ENCODE measurements at regions of chr2 and their contacts with region 1.

Region 1: GRCh38 chr2:11344342-11344955 is at the start of gene ROCK2:
- DNase-seq: peak; percentile 48 to 87
- H3K4me3 ChIP-seq: peak within 1 kb of the TSS; percentile 65
- H3K27ac ChIP-seq: peak within 1 kb of the TSS; percentile 98
- H3K4me1 ChIP-seq: peaks cover 50% of the 10 kb centered on the region
- H3K27me3 ChIP-seq: no peaks in the 10 kb centered on the region
- CTCF ChIP-seq: no peak
- total RNA-seq, gene ROCK2: 28.5 and 38.0 TPM in 2 replicates

Region 2: GRCh38 chr2:11154923-11155380 is 189.5 kb before region 1 on chr2:
- CTCF ChIA-PET with region 1: no interaction called
- POLR2A ChIA-PET with region 1: interaction called, 6 read pairs
- intact Hi-C with region 1: loop called (anchors 5 kb)
- DNase-seq: peak; percentile 84 to 97
- H3K4me3 ChIP-seq: peak overlapping the region; percentile 61
- H3K27ac ChIP-seq: peak overlapping the region; percentile 80
- H3K4me1 ChIP-seq: peaks cover 29% of the 10 kb centered on the region
- H3K27me3 ChIP-seq: no peaks in the 10 kb centered on the region
- CTCF ChIP-seq: no peak

Region 3: DNA sequence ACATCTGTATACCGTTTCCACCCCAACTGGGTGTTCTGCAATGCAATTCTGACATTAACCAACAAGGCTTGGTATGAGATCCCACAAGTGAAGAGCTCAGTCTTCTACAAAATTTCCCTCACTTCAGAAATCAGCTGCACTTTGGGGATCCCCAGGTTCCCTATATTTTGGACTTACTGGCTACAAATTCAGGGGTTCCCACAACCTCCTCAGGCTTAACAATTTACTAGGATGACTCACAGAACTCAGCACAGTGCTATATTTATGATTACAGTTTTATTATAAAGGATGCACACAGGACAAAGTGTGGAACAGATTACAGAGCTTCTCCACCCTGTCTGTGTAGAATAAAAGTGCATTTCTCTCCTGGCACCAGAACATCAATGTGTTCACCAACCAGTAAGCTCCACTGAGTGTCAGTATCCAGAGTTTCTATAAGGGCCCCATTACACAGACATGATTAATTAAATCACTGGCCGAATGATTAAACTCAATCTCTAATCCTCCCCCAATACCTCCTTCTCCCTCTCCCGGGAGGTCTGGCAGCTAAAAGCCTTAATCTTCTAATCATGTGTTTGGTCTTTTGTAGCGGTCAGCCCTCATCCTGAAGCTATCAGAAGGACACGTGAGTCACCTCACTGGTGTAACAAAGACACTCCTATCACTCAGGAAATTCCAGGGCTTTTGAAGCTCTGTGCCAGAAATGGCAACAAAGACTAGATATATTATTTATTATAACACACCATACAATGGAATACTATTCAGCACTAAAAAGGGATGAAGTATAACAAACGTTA is 104.6 kb before region 1 on chr2:
- CTCF ChIA-PET with region 1: interaction called, 3 read pairs
- POLR2A ChIA-PET with region 1: no interaction called
- intact Hi-C with region 1: loop called (anchors 5 kb)
- DNase-seq: no peak
- H3K4me3 ChIP-seq: no peak overlapping the region
- H3K27ac ChIP-seq: no peak overlapping the region
- H3K4me1 ChIP-seq: no peaks in the 10 kb centered on the region; the same call in 1 of the 2 replicates
- H3K27me3 ChIP-seq: no peaks in the 10 kb centered on the region
- CTCF ChIP-seq: no peak

Region 4: DNA sequence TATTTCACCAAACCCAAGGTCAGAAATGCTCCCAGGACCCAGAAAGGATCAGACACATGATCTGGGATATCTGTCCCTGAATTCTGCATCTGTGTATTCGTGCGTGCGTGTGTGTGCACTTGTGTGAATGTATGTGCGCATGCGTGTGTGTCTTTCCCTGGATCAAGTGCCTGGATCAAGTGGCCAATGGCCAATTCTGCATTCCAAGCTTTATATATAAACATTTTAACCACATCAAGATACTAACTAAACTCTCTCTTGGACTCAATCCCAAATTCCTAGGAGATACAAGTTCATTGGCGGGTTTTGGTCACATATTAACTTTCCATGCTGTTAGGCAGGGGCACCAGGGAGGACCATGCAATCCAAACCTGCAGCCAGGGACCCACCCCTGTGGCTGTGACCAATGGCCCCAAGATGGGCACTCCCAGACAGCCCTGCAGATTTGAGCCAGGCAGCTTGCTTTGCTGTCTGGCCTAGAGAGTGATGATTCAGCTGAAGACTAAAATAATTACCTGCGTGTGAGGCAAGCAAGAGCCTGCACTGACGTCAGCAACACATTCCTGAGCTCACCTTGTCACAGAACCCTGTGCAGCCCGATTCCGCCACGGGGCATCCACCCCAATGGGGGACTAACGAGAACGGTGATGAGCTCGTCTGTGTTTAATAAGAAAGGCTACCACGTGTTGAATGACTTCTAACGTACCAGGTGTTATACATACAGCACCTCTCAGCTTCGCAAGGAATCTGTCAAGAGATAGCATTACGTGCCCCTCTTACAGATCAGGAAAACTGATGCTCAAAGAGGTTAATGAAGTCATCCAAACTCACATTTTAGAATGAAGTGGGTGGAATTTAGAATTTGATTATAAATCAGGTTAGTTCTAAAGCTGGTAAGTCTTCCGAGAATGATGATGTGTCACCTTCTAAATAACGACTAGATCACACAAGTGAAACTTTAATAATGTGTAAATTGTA is 45.4 kb after region 1 on chr2:
- CTCF ChIA-PET with region 1: no interaction called
- POLR2A ChIA-PET with region 1: no interaction called
- intact Hi-C with region 1: loop called (anchors 5 kb)
- DNase-seq: peak in 1 of 2 experiments; percentile 82
- H3K4me3 ChIP-seq: no peak overlapping the region
- H3K27ac ChIP-seq: no peak overlapping the region
- H3K4me1 ChIP-seq: no peaks in the 10 kb centered on the region
- H3K27me3 ChIP-seq: no peaks in the 10 kb centered on the region
- CTCF ChIP-seq: no peak

Region 5: GRCh38 chr2:11539317-11540152 is 195.1 kb after region 1 on chr2:
- CTCF ChIA-PET with region 1: no interaction called
- POLR2A ChIA-PET with region 1: no interaction called
- intact Hi-C with region 1: no loop called
- DNase-seq: no peak
- H3K4me3 ChIP-seq: no peak overlapping the region
- H3K27ac ChIP-seq: no peak overlapping the region
- H3K4me1 ChIP-seq: peaks cover 2% of the 10 kb centered on the region
- H3K27me3 ChIP-seq: peaks cover 86% of the 10 kb centered on the region
- CTCF ChIP-seq: no peak

Region 6: DNA sequence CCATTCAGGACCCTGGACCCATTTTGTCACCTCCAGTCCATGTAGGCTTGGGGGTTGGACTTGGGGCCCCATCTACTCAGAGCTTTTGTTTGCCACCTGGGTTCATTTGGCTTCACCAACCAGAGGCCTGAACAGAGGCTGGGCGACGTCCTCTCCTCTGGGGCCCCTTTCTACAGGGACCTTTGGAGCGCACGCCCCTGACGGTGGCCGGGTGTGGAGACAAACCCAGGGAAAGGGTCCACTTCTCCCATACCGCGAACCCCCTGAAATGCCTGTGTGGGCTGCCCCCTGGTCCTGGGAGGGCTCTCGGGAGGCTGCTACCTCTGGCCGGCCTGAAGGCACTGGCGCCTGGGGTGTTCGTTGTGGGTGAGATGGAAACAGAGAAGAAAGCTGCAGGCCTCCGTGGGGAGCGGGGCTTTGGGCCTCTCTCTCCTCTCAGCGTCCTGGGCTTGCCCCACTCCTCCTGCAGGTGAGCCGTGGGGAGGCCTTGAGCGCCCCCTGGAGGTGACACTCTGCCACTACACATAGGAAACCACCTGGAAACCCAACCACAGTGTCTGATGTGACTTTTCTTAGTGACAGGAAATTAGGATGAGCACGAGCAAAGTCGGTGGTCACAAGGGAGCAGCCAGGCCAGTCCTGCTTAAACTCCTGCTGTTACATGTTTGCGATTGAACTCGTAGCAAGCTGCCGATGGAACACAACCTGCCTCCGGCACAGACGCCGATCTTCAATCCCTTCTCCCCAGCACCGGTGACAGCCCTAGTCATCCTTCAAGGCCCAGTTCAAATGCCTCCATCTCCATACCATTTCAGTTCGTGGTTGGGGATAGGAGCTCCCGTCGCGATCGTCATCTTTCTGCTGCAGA is 337.5 kb after region 1 on chr2:
- CTCF ChIA-PET with region 1: no interaction called
- POLR2A ChIA-PET with region 1: no interaction called
- intact Hi-C with region 1: no loop called
- DNase-seq: peak in 1 of 2 experiments; percentile 60
- H3K4me3 ChIP-seq: no peak overlapping the region
- H3K27ac ChIP-seq: no peak overlapping the region
- H3K4me1 ChIP-seq: peaks cover 19% of the 10 kb centered on the region
- H3K27me3 ChIP-seq: 0 out of 2 replicates have a peak, but pooled peaks cover 4% of the 10 kb centered on the region
- CTCF ChIP-seq: peak; percentile 99

Measured in PC-9 (cell line).